Right ventricle myocardium inferior (tissue), 1 donor: ENCODE measurements at regions of chr3 and their contacts with region 1.

Region 1: DNA sequence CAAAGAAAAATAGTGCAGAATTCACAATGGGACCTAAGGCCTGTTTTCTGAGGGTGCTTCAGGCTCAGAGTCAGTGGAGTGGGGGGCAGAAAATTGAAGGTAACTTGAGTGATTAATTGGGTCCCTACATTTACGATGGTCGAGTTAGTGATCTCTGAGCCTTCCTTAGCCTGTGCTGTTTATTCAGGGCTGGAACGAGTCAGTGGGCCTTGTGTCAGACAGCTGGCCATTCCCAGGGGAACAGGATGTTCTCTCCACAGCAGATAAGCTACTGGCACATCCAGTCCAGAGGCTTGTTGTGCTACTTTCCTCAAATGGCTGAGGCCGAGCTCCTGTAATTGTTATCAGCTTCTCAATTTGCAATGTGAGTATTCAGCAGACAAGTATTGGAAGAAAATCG is 29.2 kb upstream of the CNTN3 start:
- DNase-seq: peak; percentile 73
- ATAC-seq: peak; percentile 100

Region 2: GRCh38 chr3:74693696-74694393 is 50.2 kb after region 1 on chr3:
- intact Hi-C with region 1: loop called (anchors 5 kb)
- DNase-seq: no peak
- ATAC-seq: peak; percentile 80

Region 3: DNA sequence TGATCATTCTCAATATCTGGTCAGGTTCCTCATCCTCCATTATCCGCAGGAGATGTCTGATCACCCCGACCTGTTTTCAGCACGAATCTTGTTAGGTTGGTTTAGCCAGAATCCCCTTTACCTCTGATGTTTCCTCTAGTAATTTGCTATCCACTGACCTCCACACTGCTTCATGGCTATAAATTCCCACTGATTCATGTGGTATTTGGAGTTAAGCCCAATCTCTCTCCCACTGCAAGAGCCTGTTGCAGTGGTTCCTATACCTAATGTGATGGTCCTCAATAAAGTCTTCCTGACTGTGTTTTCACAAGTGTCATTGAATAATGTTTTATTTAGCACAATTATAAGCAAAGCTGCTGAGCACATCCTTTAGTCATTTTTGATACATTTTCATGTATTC is 95.6 kb after region 1 on chr3:
- intact Hi-C with region 1: loop called (anchors 5 kb)
- DNase-seq: no peak
- ATAC-seq: no peak